Breast epithelium (tissue), 4 donors: ENCODE measurements at regions of chr2 and their contacts with region 1.

Region 1: GRCh38 chr2:34069604-34070003 is 470.5 kb upstream of the FAM98A start:
- DNase-seq: no peak
- H3K4me3 ChIP-seq: no peak overlapping the region
- H3K27ac ChIP-seq: no peak overlapping the region
- H3K4me1 ChIP-seq: no peaks in the 10 kb centered on the region
- H3K27me3 ChIP-seq: no peaks in the 10 kb centered on the region
- CTCF ChIP-seq: no peak
- POLR2A ChIP-seq: no peak

Region 2: GRCh38 chr2:34435011-34435410 is 365.4 kb after region 1 on chr2:
- intact Hi-C with region 1: no loop called
- DNase-seq: no peak
- H3K4me3 ChIP-seq: no peak overlapping the region
- H3K27ac ChIP-seq: no peak overlapping the region
- H3K4me1 ChIP-seq: no peaks in the 10 kb centered on the region
- H3K27me3 ChIP-seq: no peaks in the 10 kb centered on the region
- CTCF ChIP-seq: no peak
- POLR2A ChIP-seq: no peak

Region 3: GRCh38 chr2:35023545-35023944 is 953.9 kb after region 1 on chr2:
- intact Hi-C with region 1: loop called (anchors 10 kb)
- DNase-seq: no peak
- H3K4me3 ChIP-seq: no peak overlapping the region
- H3K27ac ChIP-seq: no peak overlapping the region
- H3K4me1 ChIP-seq: no peaks in the 10 kb centered on the region
- H3K27me3 ChIP-seq: no peaks in the 10 kb centered on the region
- CTCF ChIP-seq: no peak
- POLR2A ChIP-seq: no peak